ENCODE measurements at regions of chr13 and their contacts with region 1.

Region 1: GRCh38 chr13:49792550-49793324 is at the start of gene KPNA3:
- DNase-seq: peak; percentile 87 to 97
- H3K4me3 ChIP-seq: peak within 1 kb of the TSS; percentile 81 to 100
- H3K27ac ChIP-seq: peak within 1 kb of the TSS; percentile 90 to 99
- H3K4me1 ChIP-seq: peaks cover 0 to 12% of the 10 kb centered on the region in 2 donors
- H3K27me3 ChIP-seq: no peaks in the 10 kb centered on the region
- CTCF ChIP-seq: peak in 2 of 3 experiments; percentile 11 to 16
- total RNA-seq, gene KPNA3: 5.9 TPM

Region 2: GRCh38 chr13:49443704-49444523 is 348.8 kb before region 1 on chr13 and contains the starts of genes CAB39L and SETDB2:
- intact Hi-C with region 1: loop called (anchors 5 kb)
- DNase-seq: peak; percentile 99 to 100
- H3K4me3 ChIP-seq: peak within 1 kb of the TSS; percentile 75 to 84
- H3K27ac ChIP-seq: peak within 1 kb of the TSS; percentile 96 to 99
- H3K4me1 ChIP-seq: peaks cover 2 to 20% of the 10 kb centered on the region in 2 donors
- H3K27me3 ChIP-seq: no peaks in the 10 kb centered on the region
- CTCF ChIP-seq: peak; percentile 26 to 45 (median 42)
- total RNA-seq, gene CAB39L: 30.1 TPM
- total RNA-seq, gene SETDB2: 7.2 TPM

Region 3: DNA sequence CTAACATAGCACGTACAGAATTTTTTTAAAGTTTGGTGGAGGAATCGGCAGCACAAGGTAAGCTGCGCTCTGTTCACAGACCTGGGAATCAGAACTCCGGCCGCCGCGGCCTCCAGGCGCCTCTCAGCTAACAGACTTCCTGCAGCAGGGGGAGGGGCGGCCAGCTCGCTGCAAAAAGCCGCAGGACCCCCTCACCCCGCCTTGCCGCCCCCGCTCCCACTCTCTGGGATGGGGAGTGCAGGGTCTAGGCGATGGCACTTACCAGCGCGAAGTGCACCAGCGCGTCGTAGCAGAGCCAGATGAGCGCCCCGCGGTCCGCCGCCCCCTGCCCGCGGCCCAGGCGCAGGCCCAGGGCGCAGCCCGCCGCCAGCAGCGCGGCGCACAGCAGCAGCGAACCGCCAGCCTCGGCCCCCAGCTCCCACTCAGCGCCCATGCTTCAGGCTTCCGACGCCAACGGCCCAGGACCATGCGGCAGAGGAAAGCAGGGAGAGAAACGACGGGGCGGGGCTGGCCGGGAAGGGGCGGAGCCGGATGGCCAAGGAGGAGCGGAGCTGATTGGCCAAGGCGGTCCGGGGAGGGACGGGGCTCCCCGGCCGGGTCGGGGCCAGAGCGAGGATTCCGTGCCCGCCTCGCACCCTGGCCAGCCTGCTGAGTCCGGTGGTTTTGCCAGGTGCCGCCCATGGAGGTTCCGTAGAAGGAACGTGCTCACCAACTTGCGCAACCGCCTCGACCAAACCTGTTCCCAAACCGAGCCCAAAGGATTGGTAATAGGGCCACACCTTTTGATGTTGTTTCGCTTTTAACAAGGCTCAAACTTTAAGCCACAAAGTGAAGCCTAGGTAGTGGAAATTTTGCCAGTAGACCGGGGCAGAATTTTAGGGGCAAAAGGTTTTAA is 101.5 kb before region 1 on chr13 and contains the start of gene EBPL:
- intact Hi-C with region 1: loop called (anchors 1 kb)
- DNase-seq: peak; percentile 72 to 95
- H3K4me3 ChIP-seq: peak within 1 kb of the TSS; percentile 84 to 93
- H3K27ac ChIP-seq: peak within 1 kb of the TSS; percentile 66 to 88
- H3K4me1 ChIP-seq: peaks cover 0 to 3% of the 10 kb centered on the region in 2 donors
- H3K27me3 ChIP-seq: no peaks in the 10 kb centered on the region
- CTCF ChIP-seq: no peak
- total RNA-seq, gene EBPL: 18.3 TPM

Region 4: DNA sequence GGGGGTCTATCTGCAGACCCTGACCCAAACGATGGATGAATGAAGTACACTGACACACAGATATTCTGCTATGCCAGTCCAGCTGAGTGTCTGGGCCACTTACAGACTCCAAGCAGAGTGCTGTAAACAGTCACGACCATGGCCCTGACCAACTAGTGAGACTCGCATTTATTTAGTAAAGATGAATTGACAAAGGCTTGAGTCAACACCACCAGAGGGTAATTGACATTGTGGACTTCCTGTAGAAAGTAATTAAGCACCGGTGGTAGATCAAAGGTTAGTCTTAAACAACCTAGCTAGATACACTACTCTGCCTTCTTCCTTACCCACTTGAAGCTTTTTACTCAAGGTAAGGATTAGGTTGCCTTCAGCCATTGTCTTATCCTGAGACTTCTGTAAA is 63.2 kb after region 1 on chr13:
- intact Hi-C with region 1: loop called (anchors 2 kb)
- DNase-seq: no peak
- H3K4me3 ChIP-seq: no peak overlapping the region
- H3K27ac ChIP-seq: no peak overlapping the region
- H3K4me1 ChIP-seq: no peaks in the 10 kb centered on the region
- H3K27me3 ChIP-seq: no peaks in the 10 kb centered on the region
- CTCF ChIP-seq: no peak

Region 5: GRCh38 chr13:49936085-49936940 is 143.6 kb after region 1 on chr13 and contains the start of gene SPRYD7:
- intact Hi-C with region 1: loop called (anchors 1 kb)
- DNase-seq: peak; percentile 92 to 99
- H3K4me3 ChIP-seq: peak within 1 kb of the TSS; percentile 78 to 97
- H3K27ac ChIP-seq: peak within 1 kb of the TSS; percentile 78 to 93
- H3K4me1 ChIP-seq: peaks cover 0 to 17% of the 10 kb centered on the region in 2 donors
- H3K27me3 ChIP-seq: no peaks in the 10 kb centered on the region
- CTCF ChIP-seq: peak; percentile 89 to 97 (median 94)
- total RNA-seq, gene SPRYD7: 1.7 TPM

Region 6: DNA sequence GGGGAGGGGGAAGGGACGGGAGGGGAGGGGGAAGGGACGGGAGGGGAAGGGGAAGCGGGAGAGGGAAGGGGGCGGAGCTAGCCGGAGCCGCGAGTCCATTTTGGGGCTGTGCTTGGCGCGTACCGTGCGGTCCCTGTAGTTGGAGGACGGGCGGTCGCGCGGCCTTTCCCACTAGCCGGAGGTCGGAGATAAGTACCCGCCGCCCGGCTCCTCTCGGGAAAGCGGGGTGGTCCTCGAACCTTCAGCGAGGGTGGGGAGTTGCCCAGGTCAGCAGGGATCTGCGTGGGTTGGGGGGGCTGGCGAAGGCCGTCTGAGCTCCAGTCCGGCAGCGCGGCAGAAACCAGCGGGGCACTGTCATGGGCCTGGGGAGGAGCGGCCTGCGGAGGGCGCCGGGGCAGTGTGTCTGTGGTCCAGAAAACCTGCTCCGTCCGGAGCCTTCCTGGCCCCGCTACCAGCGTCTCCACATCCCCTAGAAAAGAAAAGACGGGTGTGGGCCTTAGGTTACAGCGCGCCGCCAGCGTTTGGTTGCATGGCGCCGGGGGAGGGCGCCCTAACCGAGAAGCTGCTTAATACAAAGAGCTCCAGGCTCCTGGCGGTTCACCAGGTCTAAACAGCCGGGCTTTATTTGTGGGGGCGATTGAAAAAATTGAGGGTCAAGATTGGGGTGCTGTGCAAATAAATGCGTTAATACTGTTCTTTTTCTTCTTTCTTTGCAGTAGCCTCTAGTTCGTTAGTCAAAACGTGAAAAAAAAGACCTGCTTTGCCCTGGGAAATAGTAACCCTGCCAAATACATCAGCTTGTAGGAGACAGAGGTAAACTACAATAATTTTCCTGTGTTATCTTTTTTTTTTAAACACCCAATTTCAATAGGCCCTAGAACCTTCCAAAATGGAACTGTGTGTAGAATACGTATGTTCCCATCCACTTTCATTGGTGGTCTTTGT is 204.5 kb after region 1 on chr13 and contains the start of gene TRIM13:
- intact Hi-C with region 1: loop called (anchors 1 kb)
- DNase-seq: peak; percentile 74 to 96
- H3K4me3 ChIP-seq: peak within 1 kb of the TSS; percentile 96 to 99
- H3K27ac ChIP-seq: peak within 1 kb of the TSS; percentile 99 to 100
- H3K4me1 ChIP-seq: peaks cover 13 to 40% of the 10 kb centered on the region in 2 donors
- H3K27me3 ChIP-seq: no peaks in the 10 kb centered on the region
- CTCF ChIP-seq: peak; percentile 61 to 84 (median 78)
- total RNA-seq, gene TRIM13: 13.4 TPM

Region 7: DNA sequence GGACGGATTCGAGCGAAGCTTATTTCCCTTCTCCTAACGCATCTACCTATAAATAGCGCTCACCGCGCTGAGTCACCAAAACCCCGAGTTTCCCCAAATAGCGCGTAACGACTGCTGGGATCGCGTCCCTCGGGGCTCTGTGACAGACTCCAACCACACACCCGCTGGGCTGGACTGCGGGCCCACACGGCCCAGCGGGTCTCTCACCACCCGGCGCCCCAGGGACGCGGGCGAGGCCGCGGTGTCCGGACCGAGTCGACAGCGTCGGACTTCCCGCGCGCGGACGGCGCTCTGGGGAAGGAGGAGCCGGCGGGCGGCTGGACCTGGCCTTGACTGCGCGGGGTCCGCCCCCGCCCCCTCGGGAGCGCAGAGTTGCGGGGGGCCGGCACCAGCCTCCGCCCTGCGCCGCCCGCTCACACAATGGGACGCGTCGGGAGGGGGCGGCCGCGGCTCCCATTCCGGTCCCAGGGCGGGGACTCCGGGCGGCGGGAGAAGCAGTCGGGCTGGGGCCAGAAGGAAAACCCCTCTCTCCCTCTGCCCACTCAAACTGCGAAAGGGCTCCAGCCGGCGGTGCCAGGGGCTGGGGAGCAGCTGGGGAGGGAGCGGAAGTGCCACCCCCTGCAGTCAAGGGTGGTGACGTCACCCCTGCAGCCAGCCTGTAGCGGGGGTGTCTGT is 331.3 kb after region 1 on chr13:
- intact Hi-C with region 1: loop called (anchors 5 kb)
- DNase-seq: peak; percentile 92 to 98
- H3K4me3 ChIP-seq: peak overlapping the region; percentile 76 to 90
- H3K27ac ChIP-seq: peak overlapping the region; percentile 100
- H3K4me1 ChIP-seq: peaks cover 0 to 20% of the 10 kb centered on the region in 2 donors
- H3K27me3 ChIP-seq: no peaks in the 10 kb centered on the region
- CTCF ChIP-seq: no peak

Measured in ascending aorta (tissue), 2 donors.